RWPE1 (cell line): ENCODE measurements at regions of chr3 and their contacts with region 1.

Region 1: DNA sequence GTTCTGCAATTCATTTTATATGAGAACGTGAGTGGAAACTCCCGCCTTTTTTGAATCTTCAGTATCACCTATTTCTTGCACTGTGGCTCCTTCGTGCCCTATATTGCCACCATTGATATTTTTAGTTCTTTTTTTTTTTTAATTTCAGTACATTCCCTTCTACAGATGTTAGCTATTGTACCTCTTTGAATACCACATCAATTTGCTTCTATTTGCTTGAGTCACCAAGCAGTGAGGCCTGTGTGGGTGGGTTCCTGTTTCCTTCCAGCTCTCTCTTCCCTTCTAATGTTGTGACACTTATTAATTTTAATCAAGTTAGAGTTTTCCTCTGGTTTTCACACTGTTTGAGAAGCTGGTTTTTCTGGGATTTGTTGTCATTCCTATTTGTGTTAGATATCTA is 8.7 kb downstream of the HACD2 start:
- DNase-seq: no peak
- H3K27ac ChIP-seq: no peak overlapping the region
- CTCF ChIP-seq: no peak

Region 2: DNA sequence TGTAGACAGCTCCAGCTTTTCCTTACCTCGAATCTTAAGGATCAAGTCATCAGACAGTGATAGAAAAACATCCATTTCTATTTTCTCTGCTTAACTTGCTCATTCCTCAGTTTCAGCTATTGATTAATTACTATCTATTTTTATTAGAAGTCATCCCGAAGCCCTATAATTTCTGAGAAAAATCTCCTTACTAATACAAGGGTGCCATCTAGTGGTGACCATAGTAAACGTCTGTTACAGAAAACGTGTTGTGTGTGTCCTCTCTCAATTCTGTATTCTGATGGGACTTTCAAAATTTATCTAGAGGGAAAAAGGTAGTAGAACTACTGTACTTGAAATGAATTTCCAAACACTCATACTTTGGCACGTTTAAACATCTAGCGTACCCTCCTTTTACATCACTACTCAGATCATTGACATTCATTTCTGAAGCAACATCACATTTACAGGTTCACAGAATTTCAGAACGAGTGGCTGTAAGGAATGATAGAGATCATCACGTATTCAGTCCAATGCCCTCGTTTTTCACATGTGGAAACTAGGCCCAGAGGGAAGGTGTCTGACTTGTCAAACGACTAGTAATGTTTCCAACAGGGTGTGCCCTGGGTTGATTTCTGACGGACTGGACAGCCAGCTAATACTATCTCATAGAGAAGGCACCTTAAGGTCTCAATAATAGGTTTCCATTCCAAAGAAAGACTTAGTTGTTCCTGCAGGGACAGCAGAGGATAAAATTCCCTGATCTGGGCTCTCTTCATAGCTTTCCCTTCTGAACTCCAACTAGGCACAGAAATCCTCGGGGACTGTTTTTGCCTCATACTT is 16.9 kb before region 1 on chr3:
- CTCF ChIA-PET with region 1: interaction called, 12 read pairs
- POLR2A ChIA-PET with region 1: no interaction called
- DNase-seq: peak; percentile 62
- H3K27ac ChIP-seq: no peak overlapping the region
- CTCF ChIP-seq: peak; percentile 84

Region 3: DNA sequence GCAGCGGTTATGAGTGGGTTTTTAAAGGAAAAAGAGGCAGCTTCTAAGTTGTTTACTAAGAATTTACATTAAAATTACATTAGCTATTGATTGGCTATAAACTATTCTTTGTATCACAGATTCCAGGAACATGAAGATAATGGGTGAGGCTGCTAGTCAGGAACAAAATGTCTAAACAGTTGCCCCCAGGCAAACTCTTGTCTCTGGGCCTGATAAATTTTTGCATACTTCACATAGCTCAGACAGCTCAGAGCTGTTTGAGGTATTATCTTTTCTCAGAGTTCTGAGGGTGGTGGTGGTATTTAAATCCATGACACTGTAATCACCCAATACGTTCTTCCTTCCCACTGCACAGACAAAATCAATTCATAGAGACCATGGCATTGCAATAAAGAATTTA is 10.8 kb after region 1 on chr3:
- CTCF ChIA-PET with region 1: no interaction called
- POLR2A ChIA-PET with region 1: no interaction called
- DNase-seq: peak; percentile 65
- H3K27ac ChIP-seq: peak overlapping the region; percentile 81
- CTCF ChIP-seq: no peak

Region 4: DNA sequence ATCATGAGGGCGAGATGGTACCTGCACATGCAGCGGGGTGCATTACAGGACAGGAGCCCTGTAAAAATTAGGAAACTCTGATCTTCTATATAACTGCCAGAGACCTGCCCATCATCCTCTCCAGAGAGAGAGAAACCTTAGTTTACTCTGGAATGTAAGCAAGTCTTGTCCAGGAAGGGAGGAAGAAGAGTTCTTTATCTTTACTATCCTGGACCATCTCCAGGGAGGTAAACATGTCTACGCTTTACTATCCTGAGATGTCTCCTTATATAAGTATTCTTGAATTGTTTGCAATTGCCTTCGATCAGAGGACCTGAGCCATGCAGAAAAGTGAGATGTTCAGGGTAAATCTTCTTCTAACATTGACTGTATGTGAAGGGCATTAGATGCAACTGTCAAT is 21.4 kb after region 1 on chr3:
- CTCF ChIA-PET with region 1: no interaction called
- POLR2A ChIA-PET with region 1: no interaction called
- DNase-seq: no peak
- H3K27ac ChIP-seq: no peak overlapping the region
- CTCF ChIP-seq: no peak

Region 5: DNA sequence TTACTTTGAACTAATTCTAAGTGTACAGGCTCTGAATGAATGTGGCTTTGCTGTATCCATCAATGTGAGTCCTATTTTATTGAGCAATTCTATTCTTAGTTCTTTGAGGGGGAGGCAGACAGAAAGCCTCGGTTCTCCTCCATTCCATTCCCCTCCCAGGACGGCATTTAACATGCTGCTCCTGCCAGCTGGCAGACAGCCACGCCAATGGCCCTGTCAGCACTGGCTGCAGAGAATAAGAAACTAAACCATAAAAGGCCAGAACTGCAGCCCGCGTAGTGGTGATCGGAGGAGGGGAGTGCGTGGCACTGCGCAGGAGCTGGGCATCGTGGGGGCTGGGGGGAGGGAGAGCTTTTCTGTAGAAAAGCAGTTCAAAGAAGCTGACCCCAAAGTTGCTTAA is 84.8 kb after region 1 on chr3:
- CTCF ChIA-PET with region 1: no interaction called
- POLR2A ChIA-PET with region 1: no interaction called
- DNase-seq: peak; percentile 26
- H3K27ac ChIP-seq: no peak overlapping the region
- CTCF ChIP-seq: no peak

Region 6: DNA sequence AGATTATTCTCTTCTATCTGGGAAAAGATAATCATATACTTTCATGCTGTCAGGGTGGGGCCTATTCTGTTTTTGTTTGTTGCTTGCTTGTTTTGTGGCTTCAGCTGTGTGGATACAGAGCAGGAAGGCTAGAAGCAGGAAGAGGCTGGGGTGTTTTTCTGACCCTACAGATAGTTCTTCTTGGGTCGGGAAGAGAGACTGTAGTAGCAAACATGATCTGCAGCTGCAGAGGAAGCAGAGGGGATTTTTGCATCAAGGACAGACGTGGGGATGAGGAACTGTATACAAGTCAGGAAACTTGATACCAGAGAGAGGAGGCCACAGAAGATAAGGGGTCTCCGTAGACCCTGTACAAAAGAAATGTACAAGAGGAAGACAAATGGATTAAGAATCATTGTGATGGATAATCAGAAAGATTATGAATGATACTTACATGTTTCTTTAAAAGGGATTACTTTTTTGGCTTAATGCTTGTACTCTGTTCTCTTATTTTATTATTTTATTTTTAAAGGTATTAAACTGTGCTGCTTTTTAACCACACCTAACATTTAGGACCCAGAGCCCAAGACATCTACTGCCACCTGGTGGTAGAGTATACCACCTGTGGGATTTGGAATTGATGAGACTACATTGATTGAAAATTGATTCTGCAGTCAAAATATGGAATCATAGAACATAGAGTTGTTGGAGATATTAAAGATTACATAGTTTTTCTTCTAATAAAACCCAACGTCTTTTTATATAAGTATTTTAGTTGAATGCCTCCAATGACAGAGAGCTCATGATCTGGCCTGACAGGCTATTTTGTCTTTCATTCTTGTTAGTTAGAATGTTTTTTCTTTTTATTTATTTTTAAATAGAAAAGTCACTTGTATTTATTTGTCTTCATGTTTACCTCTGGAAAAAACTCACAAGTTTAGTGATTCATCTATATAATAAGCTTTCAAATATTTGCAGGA is 503.1 kb after region 1 on chr3:
- CTCF ChIA-PET with region 1: no interaction called
- POLR2A ChIA-PET with region 1: no interaction called
- DNase-seq: peak; percentile 37
- H3K27ac ChIP-seq: no peak overlapping the region
- CTCF ChIP-seq: peak; percentile 62